ENCODE measurements at regions of chr21 and their contacts with region 1.

Region 1: DNA sequence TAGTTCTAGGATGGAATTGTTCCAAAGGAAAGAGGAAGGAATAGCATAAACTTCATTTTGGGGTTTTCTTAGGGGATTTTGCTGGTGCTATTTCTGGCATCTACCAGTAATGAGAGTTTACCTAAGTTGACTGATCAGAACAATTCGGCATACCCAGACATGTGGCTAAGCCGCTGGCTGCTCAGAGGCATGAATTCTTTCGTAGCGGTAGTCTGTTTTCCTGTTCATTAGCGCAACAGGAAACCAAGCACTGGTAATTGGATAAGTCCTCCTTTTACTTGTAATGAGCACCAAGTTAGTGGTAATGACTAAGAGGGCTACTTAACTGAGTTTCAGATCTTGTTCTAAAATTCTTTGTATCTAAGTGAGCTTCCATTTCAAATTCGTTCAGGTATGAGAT is 38.6 kb downstream of the C21orf91 start:
- DNase-seq: peak; percentile 23
- H3K4me3 ChIP-seq: no peak overlapping the region
- H3K27ac ChIP-seq: no peak overlapping the region
- H3K4me1 ChIP-seq: peaks cover 57% of the 10 kb centered on the region
- CTCF ChIP-seq: no peak

Region 2: GRCh38 chr21:17387030-17387617 is 393.4 kb before region 1 on chr21:
- CTCF ChIA-PET with region 1: no interaction called
- POLR2A ChIA-PET with region 1: interaction called, 3 read pairs
- intact Hi-C with region 1: loop called (anchors 5 kb)
- DNase-seq: peak; percentile 87
- H3K4me3 ChIP-seq: peak overlapping the region; percentile 30
- H3K27ac ChIP-seq: peak overlapping the region; percentile 62
- H3K4me1 ChIP-seq: peaks cover 45% of the 10 kb centered on the region
- CTCF ChIP-seq: peak; percentile 95

Region 3: GRCh38 chr21:17512253-17513213 is 268.0 kb before region 1 on chr21 and contains the start of gene CXADR:
- CTCF ChIA-PET with region 1: no interaction called
- POLR2A ChIA-PET with region 1: interaction called, 4 read pairs
- intact Hi-C with region 1: loop called (anchors 5 kb)
- DNase-seq: peak; percentile 93
- H3K4me3 ChIP-seq: peak within 1 kb of the TSS; percentile 88
- H3K27ac ChIP-seq: peak within 1 kb of the TSS; percentile 35
- H3K4me1 ChIP-seq: peaks cover 19% of the 10 kb centered on the region
- CTCF ChIP-seq: peak; percentile 68
- total RNA-seq, gene CXADR: 6.3 and 6.7 TPM in 2 replicates

Region 4: DNA sequence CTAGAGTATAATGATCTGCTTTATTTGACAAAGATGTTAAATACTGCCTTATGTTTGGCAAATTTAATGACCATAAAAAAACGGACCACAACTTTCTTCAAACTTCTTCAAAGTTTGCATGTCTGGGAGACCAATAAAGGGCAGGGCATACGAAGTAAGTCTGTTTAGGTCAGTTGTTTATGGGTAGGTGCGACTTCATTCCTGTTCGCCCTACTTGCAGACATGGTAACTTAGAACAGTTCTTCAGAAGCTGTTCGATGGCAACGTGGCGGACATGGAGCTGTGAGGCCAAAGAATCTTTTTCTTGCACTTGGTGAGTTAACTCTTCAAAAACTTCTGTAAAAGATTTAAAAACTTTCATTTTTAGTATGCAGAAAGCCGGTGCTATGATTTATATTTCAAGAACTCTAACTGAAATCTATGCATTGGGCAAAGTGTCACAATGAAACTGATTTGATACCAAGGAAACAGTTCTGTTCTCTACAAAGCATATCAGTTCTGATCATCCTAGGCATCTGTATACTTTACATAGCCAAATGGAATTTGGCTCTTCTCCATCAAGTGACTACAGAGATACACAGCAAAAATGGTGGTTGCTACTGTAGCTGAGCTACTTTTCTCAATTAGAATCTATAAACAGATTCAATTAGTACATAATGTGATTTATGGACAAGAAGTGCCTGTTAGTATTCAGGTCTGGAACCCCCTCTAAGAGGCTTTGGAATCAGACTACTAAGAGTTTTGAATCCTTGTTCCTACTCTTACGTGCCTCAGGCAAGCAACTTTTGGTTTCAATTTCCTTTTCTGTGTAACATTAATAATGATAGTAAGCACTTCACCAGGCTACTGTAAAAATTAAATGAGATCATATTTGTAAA is 12.9 kb after region 1 on chr21:
- CTCF ChIA-PET with region 1: interaction called, 4 read pairs
- POLR2A ChIA-PET with region 1: interaction called, 27 read pairs
- intact Hi-C with region 1: no loop called
- DNase-seq: peak; percentile 16
- H3K4me3 ChIP-seq: peak overlapping the region; percentile 38
- H3K27ac ChIP-seq: no peak overlapping the region
- H3K4me1 ChIP-seq: peaks cover 34% of the 10 kb centered on the region
- CTCF ChIP-seq: no peak

Region 5: DNA sequence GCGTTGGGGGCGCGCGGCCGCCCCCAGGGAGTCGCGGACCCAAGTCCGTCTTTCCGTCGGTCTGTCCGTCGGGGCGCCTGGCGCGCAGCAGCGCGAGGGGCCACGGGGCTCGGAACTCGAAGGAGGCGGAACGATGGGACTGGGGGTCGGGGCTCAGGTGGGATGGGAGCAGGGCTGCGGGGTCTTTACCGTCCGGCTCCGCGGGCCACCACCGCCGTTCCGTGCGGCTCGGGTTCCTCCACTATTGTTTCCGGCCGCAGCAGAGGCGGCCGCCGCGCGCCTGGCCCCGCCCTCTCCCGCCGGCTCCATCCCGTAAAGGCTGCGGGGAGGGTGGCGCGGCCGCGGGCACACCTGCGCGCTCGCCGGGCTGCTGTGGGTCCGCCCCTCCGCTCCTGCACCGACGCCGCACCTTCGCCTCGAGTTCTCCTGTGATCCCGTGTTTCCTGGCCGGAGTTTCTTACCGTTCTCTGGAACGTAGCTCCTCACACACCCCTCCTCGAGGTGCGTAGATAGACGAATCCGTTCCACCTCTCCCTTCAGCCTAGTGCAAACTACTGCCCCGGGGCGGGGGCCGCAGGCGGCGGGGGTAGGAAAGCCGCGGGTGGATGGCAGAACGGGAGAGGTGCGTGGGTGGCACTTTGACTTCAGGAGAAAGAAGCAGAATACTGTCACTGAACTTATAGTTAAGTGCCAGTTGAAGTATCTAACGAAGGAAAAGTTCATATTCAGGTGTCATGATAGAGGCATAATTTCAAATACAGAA is 38.8 kb after region 1 on chr21 and contains the start of gene C21orf91:
- CTCF ChIA-PET with region 1: no interaction called
- POLR2A ChIA-PET with region 1: interaction called, 34 read pairs
- intact Hi-C with region 1: loop called (anchors 1 kb)
- DNase-seq: peak; percentile 94
- H3K4me3 ChIP-seq: peak within 1 kb of the TSS; percentile 89
- H3K27ac ChIP-seq: peak within 1 kb of the TSS; percentile 74
- H3K4me1 ChIP-seq: peaks cover 28% of the 10 kb centered on the region
- CTCF ChIP-seq: no peak
- total RNA-seq, gene C21orf91: 13.8 and 15.8 TPM in 2 replicates

Region 6: GRCh38 chr21:17889171-17889570 is 108.6 kb after region 1 on chr21:
- CTCF ChIA-PET with region 1: no interaction called
- POLR2A ChIA-PET with region 1: no interaction called
- intact Hi-C with region 1: no loop called
- DNase-seq: no peak
- H3K4me3 ChIP-seq: no peak overlapping the region
- H3K27ac ChIP-seq: no peak overlapping the region
- H3K4me1 ChIP-seq: no peaks in the 10 kb centered on the region
- CTCF ChIP-seq: no peak